ENCODE measurements at regions of chr2 and their contacts with region 1.

Region 1: DNA sequence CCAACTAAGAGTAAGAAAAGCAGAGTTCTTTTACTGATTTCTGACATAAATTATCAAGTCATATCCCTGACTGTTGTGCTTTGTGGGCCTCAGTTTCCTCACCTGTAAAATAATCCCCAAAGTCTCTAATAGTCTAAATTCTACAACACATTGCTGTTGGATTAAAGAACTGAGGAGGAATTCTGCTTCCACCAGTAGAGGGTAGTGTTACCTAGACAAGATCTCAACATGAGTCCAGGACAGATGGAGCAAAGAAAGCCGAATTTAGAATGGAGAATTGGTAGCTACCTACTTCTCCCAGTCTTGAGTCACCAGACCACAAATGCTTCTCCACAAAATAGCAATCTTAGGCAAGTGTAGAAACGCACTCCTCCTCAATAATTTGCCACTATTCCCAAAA is 462.5 kb upstream of the FSHR start:
- DNase-seq: no peak

Region 2: DNA sequence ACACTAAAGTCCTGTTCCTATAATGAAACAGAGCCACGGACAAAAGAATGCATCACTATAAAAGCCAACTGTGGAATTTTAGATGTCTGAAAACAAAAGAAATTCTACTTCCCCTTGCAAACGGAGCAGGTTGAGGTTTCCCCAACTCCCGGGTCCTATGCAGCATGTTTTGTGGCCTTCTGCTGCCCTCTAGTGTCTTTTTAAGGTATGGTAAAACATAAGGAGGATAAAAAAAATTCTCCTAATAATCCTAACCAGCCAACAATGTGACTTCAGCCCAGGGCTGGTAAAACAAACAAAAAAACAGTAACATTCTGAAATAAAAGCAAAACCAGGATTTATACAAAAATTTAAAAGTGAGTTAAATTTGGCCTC is 875.7 kb after region 1 on chr2:
- intact Hi-C with region 1: loop called (anchors 5 kb)
- DNase-seq: peak in 4 of 10 donors; percentile 12 to 79 (median 31)

Measured in posterior cingulate gyrus (tissue), 11 donors.